Activated naive CD4-positive, alpha-beta T cell treated with anti-CD3 and anti-CD28 coated beads for 36 hours (primary cell): ENCODE measurements at regions of chr17 and their contacts with region 1.

Region 1: DNA sequence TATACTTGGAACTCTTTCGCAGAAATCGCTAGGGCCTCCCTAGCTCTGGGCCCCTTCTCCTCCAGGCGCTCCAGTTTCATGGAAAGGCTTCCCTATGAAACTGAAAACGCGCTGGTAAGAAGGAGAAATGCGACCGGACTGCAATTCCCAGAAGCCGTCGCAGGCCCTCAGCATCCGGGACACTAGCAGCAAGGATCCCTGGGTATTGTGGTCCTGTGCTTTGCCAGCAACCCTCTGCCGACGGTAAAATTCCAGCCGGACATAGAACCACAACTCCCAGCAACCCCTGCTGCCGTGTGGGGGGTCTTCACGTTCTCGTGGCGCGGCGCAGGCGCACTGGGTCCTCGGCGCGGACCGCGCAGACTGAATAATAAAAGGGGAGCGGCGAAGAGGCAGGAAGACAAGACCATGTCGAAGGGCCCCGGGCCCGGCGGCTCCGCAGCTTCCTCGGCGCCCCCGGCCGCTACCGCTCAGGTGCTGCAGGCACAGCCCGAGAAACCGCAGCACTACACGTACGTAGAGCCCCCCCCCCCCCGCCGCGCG is at the start of gene UNK:
- DNase-seq: peak; percentile 98
- H3K4me3 Mint-ChIP-seq: peak within 1 kb of the TSS; percentile 90
- H3K27ac Mint-ChIP-seq: peak within 1 kb of the TSS; percentile 100
- H3K4me1 Mint-ChIP-seq: peaks cover 51% of the 10 kb centered on the region
- H3K27me3 Mint-ChIP-seq: peaks cover 2% of the 10 kb centered on the region
- total RNA-seq, gene UNK: 19.1 to 21.4 TPM

Region 2: DNA sequence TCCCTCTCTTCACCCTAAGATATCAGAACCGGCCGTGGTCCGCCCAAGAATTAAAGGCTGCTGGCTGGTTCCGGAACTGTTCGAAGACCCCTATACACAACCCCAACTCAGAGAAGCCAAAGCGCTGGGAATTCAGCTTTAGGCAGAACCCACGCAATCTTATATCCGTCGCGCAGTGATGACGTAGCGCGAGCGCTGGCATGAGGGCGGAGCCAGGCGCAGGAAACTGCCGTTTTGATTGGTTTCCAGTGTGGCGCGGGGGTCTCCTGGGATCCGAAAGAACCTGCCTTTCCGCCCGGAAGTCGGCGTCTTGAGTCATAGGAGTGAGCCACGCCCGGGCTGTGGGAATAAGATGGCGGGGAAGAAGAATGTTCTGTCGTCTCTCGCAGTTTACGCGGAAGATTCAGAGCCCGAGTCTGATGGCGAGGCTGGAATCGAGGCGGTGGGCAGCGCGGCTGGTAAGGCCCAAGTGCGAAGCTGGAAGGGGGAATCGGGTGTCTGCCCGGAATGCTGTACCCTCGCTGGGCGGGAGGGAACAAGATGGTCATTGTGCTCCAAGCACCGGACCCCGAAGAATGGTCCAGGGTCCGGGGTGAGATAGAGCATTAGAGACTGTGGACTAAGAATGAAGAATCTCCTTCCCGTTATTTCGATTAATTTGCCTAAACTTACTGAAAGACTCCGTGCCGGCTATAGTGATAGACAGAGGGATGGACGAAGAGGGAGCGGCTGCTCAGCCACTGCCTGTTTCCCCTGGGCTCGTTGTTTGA is 117.3 kb before region 1 on chr17 and contains the starts of genes RECQL5 and SAP30BP:
- CTCF ChIA-PET with region 1: no interaction called
- intact Hi-C with region 1: loop called (anchors 1 kb)
- DNase-seq: peak; percentile 99
- H3K4me3 Mint-ChIP-seq: peak within 1 kb of the TSS; percentile 64
- H3K27ac Mint-ChIP-seq: no peak within 1 kb of the TSS
- H3K4me1 Mint-ChIP-seq: peaks cover 35% of the 10 kb centered on the region
- H3K27me3 Mint-ChIP-seq: no peaks in the 10 kb centered on the region
- total RNA-seq, gene RECQL5: 36.2 to 44.0 TPM
- total RNA-seq, gene SAP30BP: 68.3 TPM

Region 3: GRCh38 chr17:75827252-75828115 is 42.9 kb after region 1 on chr17:
- CTCF ChIA-PET with region 1: interaction called, 7 read pairs
- intact Hi-C with region 1: loop called (anchors 2 kb)
- DNase-seq: peak; percentile 75
- H3K4me3 Mint-ChIP-seq: peak overlapping the region; percentile 29
- H3K27ac Mint-ChIP-seq: peak overlapping the region; percentile 80
- H3K4me1 Mint-ChIP-seq: peaks cover 18% of the 10 kb centered on the region
- H3K27me3 Mint-ChIP-seq: no peaks in the 10 kb centered on the region

Region 4: DNA sequence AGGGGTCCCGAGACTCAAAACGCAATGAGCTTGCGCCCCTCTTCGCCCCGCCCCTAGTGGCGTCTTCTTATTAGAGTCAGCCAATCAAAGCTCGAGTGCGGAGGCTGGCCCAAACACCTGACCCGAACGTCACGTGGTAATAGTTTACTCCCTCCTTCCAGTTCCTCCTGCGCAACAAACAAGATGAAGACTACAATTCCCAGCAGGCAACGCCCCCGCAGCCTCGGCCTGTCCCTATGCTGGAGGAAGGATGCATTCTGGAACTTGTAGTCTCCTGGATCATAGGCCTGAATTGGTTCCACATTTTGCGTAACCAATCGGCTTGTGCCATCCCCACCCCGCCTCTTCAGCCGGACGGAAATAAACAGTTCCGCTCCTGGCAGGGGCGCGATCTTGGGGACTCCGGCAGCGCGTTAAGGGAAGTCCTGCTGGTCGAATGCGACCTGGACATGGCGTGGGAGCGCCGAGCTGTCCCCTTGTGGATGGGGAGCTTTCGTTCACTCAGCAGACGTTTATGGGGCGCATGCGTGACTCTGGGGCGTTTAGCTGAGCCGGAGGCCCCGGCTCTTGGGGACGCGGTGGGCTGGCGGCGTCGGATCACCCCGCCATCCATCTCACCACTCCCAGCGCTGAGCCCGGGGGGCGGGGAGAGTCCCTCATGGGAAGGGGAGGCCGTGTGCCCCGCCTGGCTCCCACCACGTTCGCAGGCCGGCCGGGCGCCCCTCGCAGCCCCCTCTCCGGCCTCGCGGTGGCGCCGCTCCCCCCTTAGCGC is 71.0 kb after region 1 on chr17 and contains the start of gene WBP2:
- CTCF ChIA-PET with region 1: interaction called, 4 read pairs
- intact Hi-C with region 1: loop called (anchors 1 kb)
- DNase-seq: peak; percentile 99
- H3K4me3 Mint-ChIP-seq: no peak within 1 kb of the TSS
- H3K27ac Mint-ChIP-seq: peak within 1 kb of the TSS; percentile 74
- H3K4me1 Mint-ChIP-seq: peaks cover 39% of the 10 kb centered on the region
- H3K27me3 Mint-ChIP-seq: no peaks in the 10 kb centered on the region
- total RNA-seq, gene WBP2: 65.0 to 68.7 TPM

Region 5: DNA sequence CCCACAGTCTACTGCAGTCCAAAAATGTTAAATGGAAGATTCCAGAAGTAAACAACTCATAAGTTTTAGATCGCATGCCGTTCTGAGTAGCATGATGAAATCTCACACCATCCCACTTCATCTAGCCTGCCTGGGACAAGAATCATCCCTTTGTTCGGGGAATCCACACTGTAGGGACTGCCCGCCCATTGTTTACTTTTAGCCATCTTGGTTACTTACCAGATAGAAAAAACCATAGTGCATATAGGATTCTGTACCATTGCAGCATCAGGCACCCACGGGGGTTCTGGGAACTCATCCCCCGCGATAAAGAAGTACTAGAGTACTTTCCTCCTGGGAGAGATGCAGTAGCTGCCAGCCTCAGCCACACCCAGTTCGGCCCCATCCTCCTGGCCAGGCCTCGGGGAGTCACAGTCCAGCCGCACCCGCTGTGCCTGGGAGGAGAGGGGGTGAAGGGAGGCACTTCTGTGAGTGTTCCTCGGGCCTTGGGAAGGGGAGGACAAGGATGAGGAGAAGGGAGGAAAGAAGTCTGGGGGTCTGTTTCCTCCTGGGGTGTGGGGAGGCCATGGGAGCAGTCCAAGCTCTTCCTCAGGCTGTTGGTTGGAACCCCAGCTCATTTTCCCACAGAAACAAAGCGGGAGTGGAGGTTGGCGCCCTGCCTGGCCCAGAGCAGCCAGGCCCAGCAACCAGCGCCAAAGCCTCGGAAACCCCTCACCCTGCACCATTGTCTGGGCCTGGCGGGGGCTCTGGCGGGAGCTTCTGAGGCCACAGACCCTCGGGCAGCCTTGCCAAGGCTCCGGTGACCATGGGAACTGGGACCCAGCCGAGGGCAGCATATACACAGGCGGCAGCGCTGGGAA is 85.0 kb after region 1 on chr17:
- CTCF ChIA-PET with region 1: no interaction called
- intact Hi-C with region 1: no loop called
- DNase-seq: no peak
- H3K4me3 Mint-ChIP-seq: no peak overlapping the region
- H3K27ac Mint-ChIP-seq: no peak overlapping the region
- H3K4me1 Mint-ChIP-seq: peaks cover 26% of the 10 kb centered on the region
- H3K27me3 Mint-ChIP-seq: no peaks in the 10 kb centered on the region

Region 6: DNA sequence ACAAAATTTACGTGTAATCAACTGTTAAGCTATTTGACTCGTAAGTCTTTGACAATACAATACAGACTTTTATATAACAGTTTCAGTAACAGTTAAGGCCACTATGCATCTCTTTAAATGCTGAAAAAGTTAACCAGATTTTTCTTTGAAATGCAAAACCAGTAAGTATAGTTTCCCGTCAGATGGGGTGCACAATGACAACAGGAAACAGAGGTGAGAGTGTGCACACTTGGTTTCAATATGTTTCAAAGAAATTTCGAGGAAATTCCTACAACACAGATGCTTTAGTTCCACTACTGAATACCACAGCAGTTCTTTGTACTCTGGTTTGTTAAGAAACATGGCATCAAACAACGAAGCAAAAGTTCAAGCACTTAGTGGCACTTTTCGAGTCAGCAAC is 407.4 kb after region 1 on chr17:
- CTCF ChIA-PET with region 1: no interaction called
- intact Hi-C with region 1: loop called (anchors 5 kb)
- DNase-seq: peak; percentile 73
- H3K4me3 Mint-ChIP-seq: peak overlapping the region; percentile 66
- H3K27ac Mint-ChIP-seq: peak overlapping the region; percentile 98
- H3K4me1 Mint-ChIP-seq: peaks cover 87% of the 10 kb centered on the region
- H3K27me3 Mint-ChIP-seq: no peaks in the 10 kb centered on the region